ENCODE measurements at regions of chr15 and their contacts with region 1.

Region 1: DNA sequence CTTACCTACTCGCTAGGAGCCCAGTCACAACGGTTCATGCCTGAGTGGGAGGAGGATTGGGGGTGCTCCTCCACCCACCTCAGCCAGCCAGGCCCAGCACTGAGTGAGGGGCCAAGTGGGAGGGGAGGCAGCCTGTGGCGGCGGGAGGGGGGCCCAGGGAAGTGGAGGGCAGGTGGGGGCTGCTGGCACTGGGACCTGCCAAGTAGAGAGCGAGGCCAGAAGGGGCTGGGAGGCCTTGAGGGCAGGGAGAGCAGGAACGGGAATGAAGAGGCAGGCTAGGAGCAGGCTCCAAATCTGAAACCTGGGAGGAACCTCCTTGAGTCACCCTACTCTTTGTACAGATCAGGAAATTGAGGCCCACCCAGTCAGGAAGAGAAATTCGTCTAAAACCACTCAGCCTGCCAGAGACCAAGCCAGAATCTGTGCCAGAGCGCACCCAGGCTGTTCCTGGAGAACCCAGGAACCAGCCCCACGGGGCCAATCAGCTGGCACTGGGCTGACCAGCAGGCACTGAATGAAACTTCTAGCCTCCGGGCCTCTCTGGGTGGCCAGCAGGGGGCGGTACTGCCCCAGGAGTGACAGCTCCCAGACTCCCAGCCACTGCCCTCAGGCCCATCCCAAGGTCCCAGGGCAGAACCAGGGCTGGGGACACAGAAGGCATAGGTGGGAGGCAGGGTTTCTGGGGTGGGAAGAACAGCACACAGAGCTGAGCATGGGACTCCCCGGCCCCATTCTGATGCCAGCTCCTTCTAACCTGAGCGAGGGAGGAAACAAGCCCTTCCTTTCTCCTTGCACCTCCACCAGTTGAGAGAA is 14.8 kb upstream of the CYP11A1 start:
- DNase-seq: peak; percentile 83 to 91
- H3K4me3 ChIP-seq: no peak overlapping the region
- H3K4me3 Mint-ChIP-seq: no peak overlapping the region
- H3K27ac Mint-ChIP-seq: no peak overlapping the region
- H3K4me1 ChIP-seq: peaks cover 45% of the 10 kb centered on the region
- H3K4me1 Mint-ChIP-seq: peaks cover 6% of the 10 kb centered on the region
- H3K27me3 ChIP-seq: no peaks in the 10 kb centered on the region
- H3K27me3 Mint-ChIP-seq: no peaks in the 10 kb centered on the region
- CTCF ChIP-seq: peak; percentile 93 to 94

Region 2: DNA sequence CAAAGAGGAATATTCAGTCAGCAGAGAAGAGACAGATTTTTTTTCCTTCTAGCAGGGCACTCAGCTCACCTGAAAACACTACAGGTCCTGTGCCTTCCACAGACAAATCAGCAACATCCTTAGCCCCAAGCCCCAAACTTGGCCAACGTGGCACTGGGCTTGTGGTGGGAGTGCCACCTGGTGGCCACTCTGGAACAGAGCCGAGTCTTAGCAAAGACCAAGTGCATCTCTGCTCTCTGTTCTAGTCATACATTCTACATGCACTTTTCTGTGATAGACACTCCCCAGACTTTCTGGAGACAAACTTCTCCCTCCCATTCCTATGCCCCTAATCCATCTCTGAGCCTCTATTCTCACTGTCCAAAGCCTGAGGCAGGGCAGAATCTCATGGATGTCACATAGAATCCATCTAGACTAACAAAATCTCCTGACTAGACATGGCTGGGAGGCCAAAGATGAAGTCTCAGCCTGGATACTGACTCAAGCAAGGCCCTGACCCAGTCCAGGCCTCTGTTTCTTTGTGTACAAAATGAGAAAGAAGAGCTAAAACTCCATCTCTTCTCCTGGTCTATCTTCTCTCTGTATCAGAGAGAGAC is 56.6 kb after region 1 on chr15:
- CTCF ChIA-PET with region 1: interaction called, 12 read pairs
- POLR2A ChIA-PET with region 1: no interaction called
- intact Hi-C with region 1: loop called (anchors 1 kb)
- DNase-seq: peak; percentile 77 to 81
- H3K4me3 ChIP-seq: no peak overlapping the region
- H3K4me3 Mint-ChIP-seq: no peak overlapping the region
- H3K27ac Mint-ChIP-seq: peak overlapping the region; percentile 90
- H3K4me1 ChIP-seq: peaks cover 45% of the 10 kb centered on the region
- H3K4me1 Mint-ChIP-seq: peaks cover 45% of the 10 kb centered on the region
- H3K27me3 ChIP-seq: no peaks in the 10 kb centered on the region
- H3K27me3 Mint-ChIP-seq: no peaks in the 10 kb centered on the region
- CTCF ChIP-seq: peak; percentile 81 to 92

Region 3: GRCh38 chr15:74482661-74483060 is 100.5 kb after region 1 on chr15:
- CTCF ChIA-PET with region 1: interaction called, 18 read pairs
- POLR2A ChIA-PET with region 1: no interaction called
- intact Hi-C with region 1: no loop called
- DNase-seq: peak in 1 of 2 experiments; percentile 24
- H3K4me3 ChIP-seq: no peak overlapping the region
- H3K4me3 Mint-ChIP-seq: no peak overlapping the region
- H3K27ac Mint-ChIP-seq: no peak overlapping the region
- H3K4me1 ChIP-seq: no peaks in the 10 kb centered on the region
- H3K4me1 Mint-ChIP-seq: no peaks in the 10 kb centered on the region
- H3K27me3 ChIP-seq: no peaks in the 10 kb centered on the region
- H3K27me3 Mint-ChIP-seq: no peaks in the 10 kb centered on the region
- CTCF ChIP-seq: peak; percentile 11 to 40